H1 (cell line): ENCODE measurements at regions of chr19 and their contacts with region 1.

Region 1: GRCh38 chr19:43532962-43533545 is at the start of gene ZNF575:
- DNase-seq: peak; percentile 90 to 92
- H3K4me3 ChIP-seq: peak within 1 kb of the TSS; percentile 63 to 74 (median 68)
- H3K27ac ChIP-seq: no peak within 1 kb of the TSS
- H3K4me1 ChIP-seq: peaks cover 0 to 14% (median 4%) of the 10 kb centered on the region in 4 experiments; a peak in 6 of 7 replicates
- H3K27me3 ChIP-seq: no peaks in the 10 kb centered on the region
- CTCF ChIP-seq: no peak
- EP300 ChIP-seq: no peak
- POLR2A ChIP-seq: no peak
- RAD21 ChIP-seq: no peak
- total RNA-seq, gene ZNF575: not detected in 2 replicates

Region 2: GRCh38 chr19:43416951-43417623 is 116.0 kb before region 1 on chr19:
- CTCF ChIA-PET with region 1: no interaction called
- POLR2A ChIA-PET with region 1: no interaction called
- DNase-seq: no peak
- H3K4me3 ChIP-seq: no peak overlapping the region
- H3K27ac ChIP-seq: no peak overlapping the region
- H3K4me1 ChIP-seq: peaks cover 0 to 3% (median under 1%) of the 10 kb centered on the region in 4 experiments; a peak in 1 of 7 replicates
- H3K27me3 ChIP-seq: no peaks in the 10 kb centered on the region
- CTCF ChIP-seq: no peak
- EP300 ChIP-seq: no peak
- POLR2A ChIP-seq: no peak
- RAD21 ChIP-seq: no peak

Region 3: GRCh38 chr19:43489310-43489709 is 43.7 kb before region 1 on chr19:
- CTCF ChIA-PET with region 1: no interaction called
- POLR2A ChIA-PET with region 1: no interaction called
- DNase-seq: no peak
- H3K4me3 ChIP-seq: no peak overlapping the region
- H3K27ac ChIP-seq: no peak overlapping the region
- H3K4me1 ChIP-seq: no peaks in the 10 kb centered on the region
- H3K27me3 ChIP-seq: no peaks in the 10 kb centered on the region
- CTCF ChIP-seq: no peak
- EP300 ChIP-seq: no peak
- POLR2A ChIP-seq: no peak
- RAD21 ChIP-seq: no peak

Region 4: DNA sequence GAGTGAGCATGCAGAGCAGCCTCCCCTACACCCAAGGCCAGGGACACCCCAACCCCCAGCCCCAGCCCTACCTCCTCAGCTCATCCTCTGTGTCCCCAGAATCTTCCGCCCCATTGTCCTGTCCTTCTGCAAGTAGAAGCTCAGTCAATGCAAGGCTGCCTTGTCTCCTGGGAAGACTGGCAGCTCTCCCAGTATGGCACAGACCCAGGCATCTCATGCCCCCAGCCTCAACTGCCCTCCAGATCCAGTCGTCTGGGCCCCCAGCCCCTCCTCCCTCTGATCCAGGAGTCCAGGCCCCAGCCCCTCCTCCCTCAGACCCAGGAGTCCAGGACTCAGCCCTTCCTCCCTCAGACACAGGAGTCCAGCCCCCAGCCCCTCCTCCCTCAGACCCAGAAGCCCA is 12.9 kb after region 1 on chr19:
- CTCF ChIA-PET with region 1: interaction called, 21 read pairs
- POLR2A ChIA-PET with region 1: interaction called, 5 read pairs
- DNase-seq: no peak
- H3K4me3 ChIP-seq: no peak overlapping the region
- H3K27ac ChIP-seq: no peak overlapping the region; the same call in 1 of the 2 replicates
- H3K4me1 ChIP-seq: no peaks in the 10 kb centered on the region
- H3K27me3 ChIP-seq: no peaks in the 10 kb centered on the region; a peak in 1 of 7 replicates
- CTCF ChIP-seq: no peak
- EP300 ChIP-seq: no peak
- POLR2A ChIP-seq: no peak
- RAD21 ChIP-seq: no peak

Region 5: DNA sequence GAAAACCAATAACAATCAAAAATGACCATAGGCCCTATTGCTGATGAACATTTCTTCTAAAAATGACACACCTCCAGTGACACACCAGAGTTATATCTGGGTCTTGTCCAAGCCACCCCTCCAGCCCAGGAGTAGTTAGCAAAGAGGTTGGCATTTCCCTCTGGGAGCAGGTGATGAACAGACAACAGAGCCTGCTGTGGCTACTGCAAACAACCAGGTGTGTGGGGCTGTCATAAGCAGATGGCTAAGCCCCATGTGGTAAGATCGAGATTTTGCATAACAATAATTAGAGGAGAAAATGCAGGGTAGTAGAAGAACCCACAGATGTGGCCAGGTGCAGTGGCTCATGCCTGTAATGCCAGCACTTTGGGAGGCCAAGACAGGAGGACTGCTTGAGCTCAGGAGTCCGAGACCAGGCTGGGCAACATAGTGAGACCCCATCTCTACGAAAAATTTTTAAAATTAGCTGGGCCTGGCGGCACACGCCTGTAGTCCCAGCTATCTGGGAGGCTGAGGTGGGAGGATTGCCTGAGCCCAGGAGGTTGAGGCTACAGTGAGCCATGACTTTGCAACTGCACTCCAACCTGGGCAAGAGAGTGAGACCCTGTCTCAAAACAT is 37.2 kb after region 1 on chr19:
- CTCF ChIA-PET with region 1: interaction called, 15 read pairs
- POLR2A ChIA-PET with region 1: interaction called, 5 read pairs
- DNase-seq: no peak
- H3K4me3 ChIP-seq: no peak overlapping the region
- H3K27ac ChIP-seq: 0 out of 2 replicates have a peak overlapping the region, but pooled peaks have one; percentile 38
- H3K4me1 ChIP-seq: peaks cover 0 to 9% (median 4%) of the 10 kb centered on the region in 4 experiments; a peak in 4 of 7 replicates
- H3K27me3 ChIP-seq: no peaks in the 10 kb centered on the region
- CTCF ChIP-seq: no peak
- EP300 ChIP-seq: peak in 1 of 2 experiments; percentile 59; a peak in 1 of 3 replicates
- POLR2A ChIP-seq: no peak
- RAD21 ChIP-seq: no peak

Region 6: GRCh38 chr19:43662487-43662886 is 129.4 kb after region 1 on chr19:
- CTCF ChIA-PET with region 1: no interaction called
- POLR2A ChIA-PET with region 1: no interaction called
- DNase-seq: peak in 1 of 2 experiments; percentile 46
- H3K4me3 ChIP-seq: no peak overlapping the region
- H3K27ac ChIP-seq: no peak overlapping the region
- H3K4me1 ChIP-seq: peaks cover 0 to 6% (median 4%) of the 10 kb centered on the region in 4 experiments; a peak in 4 of 7 replicates
- H3K27me3 ChIP-seq: no peaks in the 10 kb centered on the region
- CTCF ChIP-seq: peak; percentile 27 to 57 (median 40)
- EP300 ChIP-seq: no peak
- POLR2A ChIP-seq: no peak
- RAD21 ChIP-seq: peak; percentile 28 to 41